Natural killer cell (primary cell): ENCODE measurements at regions of chr6 and their contacts with region 1.

Region 1: GRCh38 chr6:158649289-158650143 is at the start of gene SYTL3:
- DNase-seq: peak; percentile 62 to 95
- ATAC-seq: peak; percentile 47 to 73 (median 60)
- H3K4me3 ChIP-seq: peak within 1 kb of the TSS; percentile 41
- H3K4me3 Mint-ChIP-seq: peak within 1 kb of the TSS; percentile 87
- H3K27ac ChIP-seq: peak within 1 kb of the TSS; percentile 84
- H3K27ac Mint-ChIP-seq: peak within 1 kb of the TSS; percentile 96 to 99
- H3K4me1 ChIP-seq: peaks cover 66% of the 10 kb centered on the region
- H3K4me1 Mint-ChIP-seq: peaks cover 57 to 62% of the 10 kb centered on the region in 2 donors
- H3K27me3 ChIP-seq: no peaks in the 10 kb centered on the region
- H3K27me3 Mint-ChIP-seq: no peaks in the 10 kb centered on the region
- CTCF ChIP-seq: no peak
- total RNA-seq, gene SYTL3: 84.1 to 143 (median 89.0) TPM

Region 2: DNA sequence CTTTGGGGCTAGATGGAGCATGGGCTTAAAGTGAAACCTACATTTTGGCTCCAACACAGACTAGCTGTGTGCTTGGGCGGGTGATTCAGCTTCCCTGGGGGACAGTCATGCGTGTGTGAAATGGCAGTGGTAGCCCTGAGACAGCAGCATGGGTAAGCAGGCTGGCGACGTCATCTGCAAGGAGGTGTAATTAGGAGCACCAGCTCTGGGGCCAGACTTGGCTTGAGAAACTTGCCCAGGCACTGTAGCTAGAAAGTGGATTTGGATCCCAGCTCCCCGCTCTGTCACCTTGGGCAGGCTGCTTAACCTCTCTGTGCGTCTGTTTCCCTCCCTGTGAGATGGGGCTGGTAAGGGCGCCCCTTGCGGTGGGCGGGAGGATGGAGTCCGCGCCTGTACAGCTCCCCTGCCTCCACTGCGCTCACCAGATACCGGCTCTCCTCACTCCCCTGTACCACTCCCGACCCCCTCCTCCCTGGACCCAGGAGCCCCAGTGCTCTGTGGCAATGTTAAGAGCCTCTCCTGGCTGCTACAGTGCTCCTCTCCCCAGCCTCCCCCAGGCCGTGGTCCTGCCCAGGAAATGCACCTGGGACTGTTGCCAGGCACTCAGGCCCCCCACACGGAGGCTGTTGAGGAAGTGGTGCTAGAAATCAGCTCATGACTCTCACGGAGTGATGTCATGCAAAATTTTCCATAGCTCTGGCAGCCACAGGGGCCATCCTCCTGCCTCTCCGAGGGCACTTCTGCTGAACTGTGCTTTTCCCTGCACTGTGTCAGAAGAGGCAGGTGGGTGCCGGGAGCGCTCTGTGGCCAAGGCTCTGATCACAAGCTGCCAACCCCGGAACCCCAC is 623.2 kb before region 1 on chr6:
- intact Hi-C with region 1: loop called (anchors 5 kb)
- DNase-seq: peak; percentile 64 to 90
- ATAC-seq: peak; percentile 71 to 83 (median 78)
- H3K4me3 ChIP-seq: peak overlapping the region; percentile 26
- H3K4me3 Mint-ChIP-seq: peak overlapping the region; percentile 75
- H3K27ac ChIP-seq: peak overlapping the region; percentile 81
- H3K27ac Mint-ChIP-seq: peak overlapping the region; percentile 89 to 98
- H3K4me1 ChIP-seq: peaks cover 34% of the 10 kb centered on the region
- H3K4me1 Mint-ChIP-seq: peaks cover 29 to 35% of the 10 kb centered on the region in 2 donors
- H3K27me3 ChIP-seq: no peaks in the 10 kb centered on the region
- H3K27me3 Mint-ChIP-seq: no peaks in the 10 kb centered on the region
- CTCF ChIP-seq: peak; percentile 76

Region 3: DNA sequence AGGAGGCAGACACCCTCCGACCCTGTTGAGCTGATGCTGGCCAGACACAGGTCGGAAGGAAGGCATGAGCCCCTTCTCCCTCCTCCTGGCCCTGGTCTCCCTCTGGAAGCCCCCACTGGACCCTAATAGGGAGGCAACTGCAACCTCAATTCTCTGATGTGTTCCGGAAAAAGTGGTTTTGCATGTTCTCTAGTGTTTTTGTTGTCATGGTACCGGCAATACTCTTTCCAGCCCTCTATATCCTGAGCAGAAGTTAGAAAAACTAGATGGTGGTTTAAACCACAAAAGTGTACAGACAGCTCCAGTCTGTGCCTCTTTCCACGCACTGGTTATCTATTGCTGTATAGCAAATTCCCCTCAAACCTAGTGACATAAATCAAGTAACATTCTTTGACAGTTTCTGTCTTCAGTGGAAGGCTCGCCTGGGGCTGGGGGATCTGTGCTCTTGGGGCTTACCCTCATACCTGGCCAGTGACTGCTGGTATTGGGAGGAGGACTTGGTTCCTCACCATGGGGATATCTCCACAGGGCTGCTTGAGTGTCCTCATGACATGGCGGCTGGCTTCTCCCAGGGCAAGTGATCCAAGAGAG is 37.4 kb after region 1 on chr6:
- intact Hi-C with region 1: loop called (anchors 1 kb)
- DNase-seq: peak; percentile 44 to 90
- ATAC-seq: peak; percentile 84 to 94 (median 93)
- H3K4me3 ChIP-seq: no peak overlapping the region
- H3K4me3 Mint-ChIP-seq: peak overlapping the region; percentile 85
- H3K27ac ChIP-seq: peak overlapping the region; percentile 92
- H3K27ac Mint-ChIP-seq: peak overlapping the region; percentile 88 to 97
- H3K4me1 ChIP-seq: peaks cover 37% of the 10 kb centered on the region
- H3K4me1 Mint-ChIP-seq: peaks cover 43 to 51% of the 10 kb centered on the region in 2 donors
- H3K27me3 ChIP-seq: no peaks in the 10 kb centered on the region
- H3K27me3 Mint-ChIP-seq: no peaks in the 10 kb centered on the region
- CTCF ChIP-seq: no peak

Region 4: DNA sequence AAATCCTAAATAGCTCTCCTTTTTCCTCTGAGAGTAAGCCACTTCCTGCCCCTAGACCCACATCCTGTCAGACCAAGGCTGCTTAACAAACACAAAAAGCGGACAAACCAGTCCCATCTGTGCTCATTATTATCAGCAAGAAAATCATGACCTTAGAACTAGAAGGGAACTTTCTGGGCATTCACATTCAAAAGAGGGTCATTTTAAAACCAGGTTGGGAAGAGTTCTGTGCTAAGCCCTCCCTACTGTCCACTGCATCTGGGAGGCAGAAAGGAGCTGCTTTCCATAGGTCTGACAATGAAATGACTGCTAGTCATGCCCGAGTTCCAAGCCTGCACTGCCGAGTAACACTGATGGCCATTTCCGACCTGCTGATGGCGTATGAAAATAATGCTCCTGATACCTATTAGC is 154.2 kb after region 1 on chr6:
- intact Hi-C with region 1: no loop called
- DNase-seq: peak; percentile 44 to 76
- ATAC-seq: peak; percentile 65 to 80 (median 76)
- H3K4me3 ChIP-seq: peak overlapping the region; percentile 25
- H3K4me3 Mint-ChIP-seq: peak overlapping the region; percentile 72
- H3K27ac ChIP-seq: peak overlapping the region; percentile 74
- H3K27ac Mint-ChIP-seq: peak overlapping the region; percentile 88 to 91
- H3K4me1 ChIP-seq: peaks cover 56% of the 10 kb centered on the region
- H3K4me1 Mint-ChIP-seq: peaks cover 76% of the 10 kb centered on the region in 2 donors
- H3K27me3 ChIP-seq: no peaks in the 10 kb centered on the region
- H3K27me3 Mint-ChIP-seq: no peaks in the 10 kb centered on the region
- CTCF ChIP-seq: no peak

Region 5: DNA sequence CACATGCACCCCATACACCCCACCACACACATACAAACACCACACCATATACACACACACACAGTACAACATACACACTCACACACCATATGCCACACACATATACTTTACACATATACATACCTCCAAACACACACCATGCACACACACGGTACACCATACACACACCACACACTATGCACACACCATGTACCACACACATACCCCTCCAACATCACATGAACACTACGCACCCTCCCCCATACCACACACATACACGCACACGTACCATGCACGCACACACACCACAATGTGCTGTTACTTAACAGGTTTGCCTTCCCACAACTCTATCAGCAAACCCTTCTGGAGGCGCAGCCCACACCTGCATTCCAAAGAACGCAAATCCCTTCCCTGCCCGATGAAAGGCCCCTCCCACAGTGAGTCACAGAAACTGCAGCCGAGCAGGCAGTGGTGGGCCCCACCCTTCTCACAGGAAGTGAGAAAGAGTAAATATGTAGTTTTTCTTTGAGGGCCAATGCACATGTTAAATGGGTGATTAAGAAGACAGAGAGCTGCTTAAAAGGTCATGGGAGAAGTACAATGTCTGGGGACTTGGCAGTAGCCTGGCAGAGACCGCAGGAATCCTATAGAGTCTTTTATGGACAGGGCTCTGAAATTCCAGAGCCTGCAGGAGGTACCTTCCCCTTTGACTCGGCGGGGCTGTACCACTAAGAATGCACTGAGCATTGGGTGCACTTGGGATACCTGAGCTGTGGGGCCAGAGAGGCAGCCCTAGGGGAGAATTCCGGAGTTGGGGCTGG is 203.8 kb after region 1 on chr6:
- intact Hi-C with region 1: loop called (anchors 5 kb)
- DNase-seq: peak; percentile 77 to 93
- ATAC-seq: peak; percentile 65 to 86 (median 73)
- H3K4me3 ChIP-seq: peak overlapping the region; percentile 22
- H3K4me3 Mint-ChIP-seq: no peak overlapping the region
- H3K27ac ChIP-seq: peak overlapping the region; percentile 91
- H3K27ac Mint-ChIP-seq: no peak overlapping the region
- H3K4me1 ChIP-seq: peaks cover 64% of the 10 kb centered on the region
- H3K4me1 Mint-ChIP-seq: peaks cover 25 to 27% of the 10 kb centered on the region in 2 donors
- H3K27me3 ChIP-seq: no peaks in the 10 kb centered on the region
- H3K27me3 Mint-ChIP-seq: no peaks in the 10 kb centered on the region
- CTCF ChIP-seq: no peak

Region 6: DNA sequence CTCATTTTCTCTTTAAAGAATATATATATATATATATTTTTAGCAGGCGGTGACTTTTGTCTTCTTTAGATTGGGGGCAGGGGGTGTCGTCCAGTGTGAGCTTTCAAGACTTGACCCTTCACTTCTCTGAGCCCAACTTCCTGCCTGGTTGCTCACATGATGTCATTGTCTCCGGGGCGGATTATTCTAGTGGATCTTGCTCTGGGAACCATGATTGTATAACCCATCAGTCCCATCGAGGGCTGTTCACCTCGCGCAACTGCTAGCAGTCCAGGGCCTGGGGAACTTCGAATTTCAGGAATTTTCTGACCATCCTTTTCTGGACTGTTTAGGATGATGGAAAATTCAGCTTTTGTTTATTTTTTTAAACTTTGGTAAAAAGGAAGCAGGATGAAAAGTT is 1320.4 kb after region 1 on chr6:
- intact Hi-C with region 1: loop called (anchors 10 kb)
- DNase-seq: peak; percentile 41 to 61
- ATAC-seq: peak; percentile 19 to 44 (median 43)
- H3K4me3 ChIP-seq: peak overlapping the region; percentile 64
- H3K4me3 Mint-ChIP-seq: peak overlapping the region; percentile 96
- H3K27ac ChIP-seq: peak overlapping the region; percentile 62
- H3K27ac Mint-ChIP-seq: peak overlapping the region; percentile 94 to 99
- H3K4me1 ChIP-seq: peaks cover 43% of the 10 kb centered on the region
- H3K4me1 Mint-ChIP-seq: peaks cover 47 to 48% of the 10 kb centered on the region in 2 donors
- H3K27me3 ChIP-seq: no peaks in the 10 kb centered on the region
- H3K27me3 Mint-ChIP-seq: no peaks in the 10 kb centered on the region
- CTCF ChIP-seq: no peak